B cell (primary cell): ENCODE measurements at regions of chr19 and their contacts with region 1.

Region 1: GRCh38 chr19:36514012-36514612 is 14.0 kb downstream of the ZNF260 start:
- DNase-seq: no peak
- ATAC-seq: no peak
- H3K4me3 ChIP-seq: no peak overlapping the region
- H3K4me3 Mint-ChIP-seq: no peak overlapping the region
- H3K27ac ChIP-seq: no peak overlapping the region
- H3K27ac Mint-ChIP-seq: no peak overlapping the region
- H3K4me1 ChIP-seq: no peaks in the 10 kb centered on the region
- H3K4me1 Mint-ChIP-seq: no peaks in the 10 kb centered on the region
- H3K27me3 ChIP-seq: no peaks in the 10 kb centered on the region
- H3K27me3 Mint-ChIP-seq: no peaks in the 10 kb centered on the region
- CTCF ChIP-seq: no peak

Region 2: DNA sequence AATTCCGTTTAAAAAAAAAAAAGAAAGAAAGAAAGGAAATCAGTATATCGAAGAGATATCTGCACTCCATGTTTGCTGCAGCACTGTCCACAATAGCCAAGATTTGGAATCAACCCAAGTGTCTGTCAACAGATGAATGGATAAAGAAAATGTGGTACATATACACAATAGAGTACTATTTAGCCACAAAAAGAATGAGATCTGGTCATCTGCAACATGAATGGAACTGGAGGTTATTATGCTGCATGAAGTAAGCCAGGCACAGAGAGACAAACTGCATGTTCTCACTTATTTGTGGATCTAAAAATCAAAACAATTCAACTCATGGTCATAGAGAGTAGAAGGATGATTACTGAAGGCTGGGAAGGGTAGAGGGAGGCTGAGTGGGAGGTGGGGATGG is 316.0 kb before region 1 on chr19:
- CTCF ChIA-PET with region 1: no interaction called
- POLR2A ChIA-PET with region 1: interaction called, 11 read pairs
- intact Hi-C with region 1: no loop called
- DNase-seq: no peak
- ATAC-seq: no peak
- H3K4me3 ChIP-seq: no peak overlapping the region
- H3K4me3 Mint-ChIP-seq: no peak overlapping the region
- H3K27ac ChIP-seq: no peak overlapping the region
- H3K27ac Mint-ChIP-seq: no peak overlapping the region
- H3K4me1 ChIP-seq: peaks cover 0 to 6% of the 10 kb centered on the region in 2 donors
- H3K4me1 Mint-ChIP-seq: peaks cover 4% of the 10 kb centered on the region
- H3K27me3 ChIP-seq: no peaks in the 10 kb centered on the region
- H3K27me3 Mint-ChIP-seq: no peaks in the 10 kb centered on the region
- CTCF ChIP-seq: no peak

Region 3: DNA sequence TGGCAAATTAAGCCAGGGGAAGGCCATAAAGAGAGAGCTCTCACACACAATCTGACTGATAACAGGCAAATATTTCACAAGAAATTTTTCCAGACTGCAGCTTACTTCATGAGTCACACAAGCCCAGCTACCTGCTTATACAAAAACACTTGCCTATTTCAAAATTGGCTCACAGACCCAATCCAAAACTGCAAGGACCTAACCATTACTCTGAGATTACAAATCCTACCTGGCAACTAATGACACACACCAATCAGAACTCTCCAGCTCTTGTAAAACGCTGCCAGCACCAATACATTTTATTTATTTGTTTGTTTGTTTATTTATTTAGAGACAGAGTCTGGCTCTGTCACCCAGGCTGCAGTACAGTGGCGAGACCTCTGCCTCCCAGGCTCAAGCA is 77.6 kb before region 1 on chr19:
- CTCF ChIA-PET with region 1: no interaction called
- POLR2A ChIA-PET with region 1: no interaction called
- intact Hi-C with region 1: no loop called
- DNase-seq: peak; percentile 40
- ATAC-seq: no peak
- H3K4me3 ChIP-seq: no peak overlapping the region
- H3K4me3 Mint-ChIP-seq: no peak overlapping the region
- H3K27ac ChIP-seq: no peak overlapping the region
- H3K27ac Mint-ChIP-seq: no peak overlapping the region
- H3K4me1 ChIP-seq: no peaks in the 10 kb centered on the region
- H3K4me1 Mint-ChIP-seq: no peaks in the 10 kb centered on the region
- H3K27me3 ChIP-seq: no peaks in the 10 kb centered on the region
- H3K27me3 Mint-ChIP-seq: no peaks in the 10 kb centered on the region
- CTCF ChIP-seq: no peak

Region 4: GRCh38 chr19:36483653-36484052 is 30.5 kb before region 1 on chr19:
- CTCF ChIA-PET with region 1: no interaction called
- POLR2A ChIA-PET with region 1: no interaction called
- intact Hi-C with region 1: no loop called
- DNase-seq: peak; percentile 23
- ATAC-seq: no peak
- H3K4me3 ChIP-seq: no peak overlapping the region
- H3K4me3 Mint-ChIP-seq: no peak overlapping the region
- H3K27ac ChIP-seq: no peak overlapping the region
- H3K27ac Mint-ChIP-seq: no peak overlapping the region
- H3K4me1 ChIP-seq: peaks cover 14 to 16% of the 10 kb centered on the region in 2 donors
- H3K4me1 Mint-ChIP-seq: peaks cover 28% of the 10 kb centered on the region
- H3K27me3 ChIP-seq: no peaks in the 10 kb centered on the region
- H3K27me3 Mint-ChIP-seq: no peaks in the 10 kb centered on the region
- CTCF ChIP-seq: no peak